Body of pancreas (tissue), 4 donors: ENCODE measurements at regions of chr1 and their contacts with region 1.

Region 1: GRCh38 chr1:202315576-202316168 is 26.1 kb downstream of the UBE2T start:
- DNase-seq: peak; percentile 82 to 87 (median 83)
- ATAC-seq: peak; percentile 88
- H3K4me3 ChIP-seq: no peak overlapping the region
- H3K27ac ChIP-seq: no peak overlapping the region
- H3K4me1 ChIP-seq: no peaks in the 10 kb centered on the region
- H3K27me3 ChIP-seq: no peaks in the 10 kb centered on the region
- CTCF ChIP-seq: peak; percentile 73 to 93 (median 87)
- POLR2A ChIP-seq: no peak

Region 2: GRCh38 chr1:202184750-202185460 is 130.8 kb before region 1 on chr1:
- intact Hi-C with region 1: loop called (anchors 5 kb)
- DNase-seq: peak; percentile 78 to 87 (median 82)
- ATAC-seq: peak; percentile 76
- H3K4me3 ChIP-seq: no peak overlapping the region
- H3K27ac ChIP-seq: no peak overlapping the region
- H3K4me1 ChIP-seq: no peaks in the 10 kb centered on the region
- H3K27me3 ChIP-seq: no peaks in the 10 kb centered on the region
- CTCF ChIP-seq: peak; percentile 58 to 85 (median 67)
- POLR2A ChIP-seq: no peak